HEK293T (cell line): ENCODE measurements at regions of chr3 and their contacts with region 1.

Region 1: GRCh38 chr3:10672422-10672821 is 143.6 kb upstream of the SLC6A11 start:
- DNase-seq: no peak

Region 2: GRCh38 chr3:10627885-10628572 is 44.4 kb before region 1 on chr3:
- CTCF ChIA-PET with region 1: no interaction called
- POLR2A ChIA-PET with region 1: no interaction called
- DNase-seq: no peak

Region 3: DNA sequence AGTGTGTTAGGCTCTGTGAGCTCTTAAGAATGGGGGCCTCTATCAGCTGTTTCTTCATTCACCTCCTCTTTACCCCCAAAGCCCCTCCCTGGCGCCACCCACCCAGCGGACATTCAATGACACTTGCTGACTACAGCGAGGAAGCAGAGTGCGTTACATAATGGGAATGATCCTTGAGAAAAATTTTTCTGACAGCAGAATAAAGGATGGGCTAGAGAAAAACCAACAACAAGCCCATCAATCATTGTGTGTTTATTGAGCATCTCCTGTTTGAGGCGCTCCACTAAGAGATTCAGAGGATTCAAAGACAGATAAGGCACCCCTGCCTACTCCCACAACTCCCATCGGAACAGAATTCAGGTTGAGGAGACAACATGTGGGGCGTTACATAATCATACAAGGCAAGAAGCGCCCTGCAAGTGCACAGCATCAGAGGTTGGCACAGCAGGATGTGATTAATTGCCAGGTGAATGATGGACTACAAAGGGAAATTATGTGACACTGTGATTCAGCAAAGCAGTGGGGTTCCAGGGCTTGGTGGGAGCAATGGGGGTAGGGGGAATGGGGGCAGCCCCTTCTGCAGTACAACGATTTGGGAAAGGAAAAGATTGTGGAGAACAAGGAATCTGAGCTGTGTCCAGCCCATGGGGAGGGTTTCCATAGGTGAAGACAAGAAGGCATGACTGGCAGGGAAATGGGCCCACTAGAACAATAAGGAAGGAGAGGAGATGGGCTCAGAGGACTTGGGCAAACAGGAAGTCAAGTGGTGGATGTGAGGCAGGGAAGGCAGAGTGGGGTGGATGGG is 25.7 kb before region 1 on chr3:
- CTCF ChIA-PET with region 1: no interaction called
- POLR2A ChIA-PET with region 1: no interaction called
- DNase-seq: no peak

Region 4: DNA sequence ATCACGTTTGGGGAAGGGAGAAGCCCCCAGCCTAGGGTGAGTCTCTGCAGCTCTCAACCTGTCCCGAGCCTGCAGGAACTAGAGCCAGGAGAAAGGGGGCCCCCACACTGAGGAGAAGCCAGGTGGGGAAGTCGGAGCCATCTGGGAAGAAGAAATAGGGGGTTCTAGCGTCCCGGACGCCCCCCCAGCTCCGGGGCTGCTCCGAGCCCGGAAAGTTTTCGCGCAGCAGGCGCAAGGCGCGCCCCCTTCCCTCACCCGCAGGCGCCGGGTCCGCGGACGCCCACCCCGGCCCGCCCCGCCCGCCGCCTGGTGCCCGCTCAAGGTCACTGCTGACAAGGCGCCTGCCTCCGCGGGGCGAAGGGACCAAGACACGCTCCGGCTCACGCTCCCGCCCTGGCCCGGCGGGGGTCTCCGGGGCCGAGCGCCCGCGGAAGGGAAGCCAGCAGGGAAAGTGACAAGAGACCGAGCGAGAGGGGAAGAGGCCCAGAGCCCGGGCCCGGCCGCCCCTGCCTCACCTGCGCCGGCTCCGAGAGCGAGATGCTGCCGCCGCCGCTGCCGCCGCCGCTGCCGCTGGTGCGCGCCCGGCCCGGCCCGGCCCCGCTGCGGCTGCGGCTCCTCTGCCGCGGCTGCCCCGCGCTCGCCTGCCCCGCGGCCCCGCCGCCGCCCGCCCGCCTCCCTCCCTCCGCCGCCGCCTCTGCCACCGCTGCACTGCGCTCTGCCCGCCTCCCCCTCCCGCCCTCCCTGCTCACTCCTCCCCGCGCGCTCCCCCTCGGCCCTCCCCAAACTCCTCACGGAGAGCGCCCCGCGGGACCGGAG is 35.2 kb after region 1 on chr3:
- CTCF ChIA-PET with region 1: no interaction called
- POLR2A ChIA-PET with region 1: no interaction called
- DNase-seq: peak; percentile 38

Region 5: GRCh38 chr3:10772271-10773161 is 100.1 kb after region 1 on chr3:
- CTCF ChIA-PET with region 1: no interaction called
- POLR2A ChIA-PET with region 1: no interaction called
- DNase-seq: peak; percentile 38

Region 6: DNA sequence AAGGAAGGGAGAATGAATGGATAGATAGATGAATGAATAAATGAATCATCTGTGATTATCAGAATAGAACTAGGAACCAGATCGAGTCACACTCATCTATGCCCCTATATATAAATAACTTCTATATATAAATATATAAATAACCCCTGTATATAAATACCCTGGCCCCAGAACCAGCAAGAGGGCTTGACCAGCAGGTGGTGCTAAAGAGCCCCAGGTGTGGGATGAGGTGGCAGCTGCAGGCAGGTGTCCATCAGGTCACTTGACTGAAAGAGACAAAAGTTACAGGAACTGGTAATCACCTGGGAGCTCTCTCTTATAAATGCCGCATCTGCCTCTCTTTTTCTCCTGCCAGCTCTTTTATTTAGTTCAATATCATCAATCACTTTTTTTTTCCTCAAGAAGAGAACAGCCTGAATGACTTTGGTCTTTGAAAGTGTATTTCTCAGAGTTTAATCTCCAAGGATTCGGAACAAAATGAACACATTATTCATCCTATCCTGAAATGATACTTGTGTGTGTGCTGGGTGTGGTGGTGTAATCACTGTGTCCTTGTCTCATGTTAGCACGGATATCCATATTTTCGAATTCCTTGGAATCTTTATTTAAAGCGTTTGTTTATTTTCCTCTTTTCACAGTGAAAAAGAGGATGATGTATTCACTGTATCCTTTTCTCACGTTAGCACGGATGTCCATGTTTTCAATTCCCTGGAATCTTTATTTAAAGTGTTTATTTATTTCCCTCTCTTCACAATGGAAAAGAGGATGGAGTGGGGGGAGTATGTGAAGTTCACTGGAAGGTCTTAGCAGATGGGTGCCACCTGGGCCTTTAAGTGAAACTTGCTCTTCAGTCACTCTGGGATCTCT is 564.4 kb after region 1 on chr3:
- CTCF ChIA-PET with region 1: interaction called, 12 read pairs
- POLR2A ChIA-PET with region 1: no interaction called
- DNase-seq: peak; percentile 63